Endothelial cell of umbilical vein (primary cell): ENCODE measurements at regions of chr4 and their contacts with region 1.

Region 1: DNA sequence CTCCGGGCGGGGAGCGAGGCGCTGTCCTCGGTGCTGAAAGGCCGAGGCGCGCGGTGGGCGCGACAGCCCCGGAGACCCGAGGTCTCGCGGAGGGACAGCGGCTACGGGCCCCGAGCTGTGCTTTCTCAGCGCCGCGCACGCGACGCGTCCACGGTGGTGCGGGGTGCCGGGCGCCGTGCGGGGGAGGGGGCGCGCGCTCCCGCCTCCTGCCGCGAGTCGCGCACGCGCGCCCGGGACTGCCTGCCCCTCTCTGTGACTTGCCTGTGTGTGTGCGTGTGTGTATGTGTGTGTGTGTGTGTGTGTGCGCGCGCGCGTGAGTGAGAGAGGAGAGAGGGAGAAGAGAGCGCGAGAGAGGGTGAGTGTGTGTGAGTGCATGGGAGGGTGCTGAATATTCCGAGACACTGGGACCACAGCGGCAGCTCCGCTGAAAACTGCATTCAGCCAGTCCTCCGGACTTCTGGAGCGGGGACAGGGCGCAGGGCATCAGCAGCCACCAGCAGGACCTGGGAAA is at the start of gene GRIA2:
- DNase-seq: peak; percentile 69
- H3K4me3 ChIP-seq: peak within 1 kb of the TSS in 2 of 3 experiments; percentile 11 to 22
- H3K27ac ChIP-seq: no peak within 1 kb of the TSS
- H3K4me1 ChIP-seq: peaks cover 7% of the 10 kb centered on the region
- H3K27me3 ChIP-seq: peaks cover 28 to 45% of the 10 kb centered on the region in 2 experiments
- CTCF ChIP-seq: no peak
- POLR2A ChIP-seq: no peak
- total RNA-seq, gene GRIA2: not detected in 2 replicates

Region 2: DNA sequence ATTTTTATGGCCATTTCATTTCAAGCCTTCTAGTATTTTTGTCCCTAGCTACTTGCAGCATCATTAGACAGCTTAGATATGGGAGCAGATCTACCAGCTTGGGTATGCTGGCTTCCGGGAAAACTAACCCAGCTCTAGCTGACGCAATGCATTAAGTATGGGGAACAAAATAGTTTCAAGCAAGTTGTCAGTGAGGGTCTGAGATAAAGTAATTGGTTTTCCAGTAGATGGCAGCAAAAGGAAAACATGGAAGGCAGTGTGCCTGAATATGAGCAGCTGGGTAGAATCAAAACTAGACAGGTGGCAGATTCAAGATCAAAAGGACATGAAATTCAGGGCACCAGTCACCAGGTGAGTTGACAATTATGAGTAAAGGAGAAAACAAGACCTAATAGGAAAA is 925.8 kb before region 1 on chr4:
- CTCF ChIA-PET with region 1: no interaction called
- POLR2A ChIA-PET with region 1: no interaction called
- dilution Hi-C with region 1: no loop called
- intact Hi-C with region 1: loop called (anchors 5 kb)
- DNase-seq: peak; percentile 43
- H3K4me3 ChIP-seq: no peak overlapping the region
- H3K27ac ChIP-seq: peak overlapping the region; percentile 29
- H3K4me1 ChIP-seq: peaks cover 7% of the 10 kb centered on the region
- H3K27me3 ChIP-seq: no peaks in the 10 kb centered on the region
- CTCF ChIP-seq: no peak
- POLR2A ChIP-seq: no peak

Region 3: DNA sequence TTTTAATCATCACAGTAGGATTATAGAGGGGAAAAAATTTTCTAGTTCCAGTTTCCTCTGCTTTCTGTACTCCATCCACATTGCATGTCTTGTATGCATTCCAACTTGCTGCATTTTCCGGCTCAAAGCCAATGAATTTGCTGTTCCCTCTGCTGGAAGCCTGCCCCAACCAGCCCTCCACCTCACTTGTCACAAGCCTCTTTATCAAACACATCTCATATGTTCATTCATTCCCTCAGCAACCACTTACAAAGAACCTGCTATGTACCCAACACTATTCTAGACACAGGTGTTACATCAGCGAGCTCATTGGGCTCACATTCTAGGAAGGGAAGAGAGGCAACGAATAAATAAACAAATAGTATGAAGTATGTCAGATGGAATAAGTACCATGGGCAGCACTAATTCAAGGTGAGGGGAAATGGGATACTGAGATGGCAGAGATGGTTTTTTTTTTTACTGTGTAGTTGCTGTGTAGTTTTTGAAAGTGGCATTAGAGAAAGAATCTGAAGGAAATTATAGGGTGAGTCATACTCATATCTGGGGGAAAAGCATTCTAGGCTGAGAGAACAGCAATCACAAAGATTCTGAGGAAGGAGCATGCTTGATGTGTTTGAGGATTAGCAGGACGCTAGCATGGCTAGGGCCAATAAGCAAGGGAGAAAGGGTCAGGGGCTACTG is 581.4 kb before region 1 on chr4:
- CTCF ChIA-PET with region 1: no interaction called
- POLR2A ChIA-PET with region 1: no interaction called
- dilution Hi-C with region 1: no loop called
- intact Hi-C with region 1: no loop called
- DNase-seq: no peak
- H3K4me3 ChIP-seq: no peak overlapping the region
- H3K27ac ChIP-seq: no peak overlapping the region
- H3K4me1 ChIP-seq: no peaks in the 10 kb centered on the region
- H3K27me3 ChIP-seq: no peaks in the 10 kb centered on the region
- CTCF ChIP-seq: no peak
- POLR2A ChIP-seq: no peak

Region 4: DNA sequence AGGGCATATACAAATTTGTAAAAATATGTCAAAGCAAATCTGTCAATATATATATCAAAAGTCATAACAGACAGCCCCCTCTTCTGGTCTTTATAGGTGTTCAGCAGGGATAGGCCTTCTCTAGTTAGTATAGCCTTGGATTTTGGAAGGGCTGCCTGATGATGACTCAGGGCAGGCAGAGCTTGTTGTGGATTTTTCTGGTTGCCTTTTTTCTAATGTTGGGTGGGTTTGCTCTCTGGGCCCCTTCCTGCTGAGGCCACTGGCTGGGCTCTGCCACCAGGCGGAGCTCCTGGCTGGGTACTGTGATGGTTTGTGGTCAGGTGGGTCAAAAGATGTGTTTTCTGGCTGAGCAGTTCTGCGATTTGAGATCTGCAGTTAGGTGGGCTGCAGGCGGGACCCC is 294.3 kb after region 1 on chr4:
- CTCF ChIA-PET with region 1: no interaction called
- POLR2A ChIA-PET with region 1: no interaction called
- dilution Hi-C with region 1: no loop called
- intact Hi-C with region 1: loop called (anchors 1 kb)
- DNase-seq: no peak
- H3K4me3 ChIP-seq: no peak overlapping the region
- H3K27ac ChIP-seq: no peak overlapping the region
- H3K4me1 ChIP-seq: no peaks in the 10 kb centered on the region
- H3K27me3 ChIP-seq: no peaks in the 10 kb centered on the region
- CTCF ChIP-seq: peak; percentile 38 to 57
- POLR2A ChIP-seq: no peak

Region 5: GRCh38 chr4:157655096-157655809 is 434.8 kb after region 1 on chr4:
- CTCF ChIA-PET with region 1: no interaction called
- POLR2A ChIA-PET with region 1: no interaction called
- dilution Hi-C with region 1: no loop called
- intact Hi-C with region 1: no loop called
- DNase-seq: no peak
- H3K4me3 ChIP-seq: no peak overlapping the region
- H3K27ac ChIP-seq: no peak overlapping the region
- H3K4me1 ChIP-seq: no peaks in the 10 kb centered on the region
- H3K27me3 ChIP-seq: no peaks in the 10 kb centered on the region
- CTCF ChIP-seq: no peak
- POLR2A ChIP-seq: no peak

Region 6: DNA sequence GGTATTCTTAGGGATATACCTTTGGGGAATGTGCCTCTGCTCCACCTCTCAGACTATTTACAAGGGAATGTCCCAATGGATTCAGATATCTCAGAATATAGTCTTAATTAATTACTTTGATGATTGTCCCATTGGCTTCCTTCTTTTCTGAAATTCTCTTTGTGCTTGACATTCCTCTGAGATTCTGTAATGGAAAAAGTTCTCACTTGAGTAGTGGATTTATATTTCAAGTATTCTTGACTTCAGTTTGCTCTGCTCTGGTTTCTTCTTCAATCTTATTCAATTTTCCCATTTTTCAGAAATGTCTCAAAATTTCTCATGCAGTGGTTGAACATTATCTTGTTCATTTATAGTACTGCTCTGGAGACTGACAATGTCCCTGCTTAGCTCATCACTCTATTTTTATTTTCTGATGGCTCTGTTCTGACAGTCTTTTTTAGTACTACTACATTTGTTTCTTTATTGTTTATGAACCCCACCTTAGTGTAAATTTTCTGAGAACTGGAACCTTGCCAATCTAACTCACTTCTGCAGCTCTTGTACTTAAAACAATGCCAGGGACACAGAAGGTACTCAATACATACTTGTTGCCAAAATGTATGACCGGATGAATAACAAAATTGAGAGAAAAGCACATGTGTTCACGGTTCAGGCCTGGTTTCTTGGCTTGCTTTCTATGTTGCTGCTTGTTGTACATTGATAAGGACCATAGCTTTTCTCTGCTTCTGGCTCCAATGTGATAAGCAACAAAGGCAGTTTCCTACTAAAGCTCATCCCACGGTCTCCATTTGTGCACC is 480.7 kb after region 1 on chr4:
- CTCF ChIA-PET with region 1: no interaction called
- POLR2A ChIA-PET with region 1: no interaction called
- dilution Hi-C with region 1: no loop called
- intact Hi-C with region 1: loop called (anchors 5 kb)
- DNase-seq: peak; percentile 98
- H3K4me3 ChIP-seq: peak overlapping the region in 1 of 3 experiments; percentile 10
- H3K27ac ChIP-seq: peak overlapping the region; percentile 79
- H3K4me1 ChIP-seq: peaks cover 25% of the 10 kb centered on the region
- H3K27me3 ChIP-seq: no peaks in the 10 kb centered on the region
- CTCF ChIP-seq: no peak
- POLR2A ChIP-seq: no peak

Region 7: DNA sequence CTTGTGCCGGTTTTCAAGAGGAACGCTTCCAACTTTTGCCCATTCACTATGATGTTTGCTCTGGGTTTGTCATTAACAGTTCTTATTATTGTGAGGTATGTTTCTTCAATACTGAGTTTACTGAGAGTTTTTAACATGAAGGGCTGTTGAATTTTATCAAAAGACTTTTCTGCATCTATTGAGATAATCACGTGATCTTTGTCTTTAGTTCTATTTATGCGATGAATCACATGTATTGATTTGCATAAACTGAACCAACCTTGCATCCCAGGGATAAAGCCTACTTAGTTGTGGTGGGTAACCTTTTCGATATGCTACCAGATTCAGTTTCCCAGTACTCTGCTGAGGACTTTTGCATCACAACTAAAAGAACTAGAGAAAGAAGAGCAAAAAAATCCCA is 634.4 kb after region 1 on chr4:
- CTCF ChIA-PET with region 1: no interaction called
- POLR2A ChIA-PET with region 1: no interaction called
- dilution Hi-C with region 1: no loop called
- intact Hi-C with region 1: no loop called
- DNase-seq: no peak
- H3K4me3 ChIP-seq: no peak overlapping the region
- H3K27ac ChIP-seq: no peak overlapping the region
- H3K4me1 ChIP-seq: no peaks in the 10 kb centered on the region
- H3K27me3 ChIP-seq: no peaks in the 10 kb centered on the region
- CTCF ChIP-seq: no peak
- POLR2A ChIP-seq: no peak